ENCODE measurements at regions of chr4 and their contacts with region 1.

Region 1: DNA sequence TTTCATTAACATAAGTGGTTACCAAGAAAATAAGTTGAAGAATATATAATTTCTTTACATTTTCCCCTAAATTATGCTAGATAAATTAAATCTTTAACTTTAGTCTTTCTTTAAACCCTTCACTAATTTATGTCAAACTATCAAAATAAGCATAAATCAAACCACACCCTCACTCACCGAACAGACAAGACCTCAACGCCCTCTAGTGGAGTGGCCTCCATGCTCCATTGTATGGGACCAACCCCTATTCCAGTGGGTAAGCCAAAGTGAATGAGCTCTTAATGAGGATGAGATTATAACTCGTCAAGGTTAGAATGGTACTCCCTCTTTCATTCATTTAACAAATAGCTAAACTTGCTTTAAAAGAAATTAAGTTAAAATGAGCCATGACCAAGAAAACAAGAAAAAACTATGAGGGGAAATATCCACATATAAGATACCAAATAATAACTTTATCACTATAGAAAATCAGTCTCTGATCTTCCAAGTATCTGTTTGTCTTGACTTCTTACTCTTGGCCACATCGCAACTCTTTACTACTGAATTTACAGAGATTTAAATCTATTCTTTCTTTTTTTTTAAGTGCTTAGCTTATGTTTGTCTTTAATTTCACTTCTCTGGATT is 15.6 kb upstream of the BBS12 start:
- DNase-seq: peak; percentile 61 to 67 (median 65)
- H3K4me3 ChIP-seq: no peak overlapping the region
- H3K4me3 Mint-ChIP-seq: no peak overlapping the region
- H3K27ac ChIP-seq: no peak overlapping the region
- H3K27ac Mint-ChIP-seq: peak overlapping the region in 3 of 7 donors; percentile 1 to 63 (median 28)
- H3K4me1 ChIP-seq: peaks cover 5% of the 10 kb centered on the region
- H3K4me1 Mint-ChIP-seq: peaks cover 0 to 5% (median 2%) of the 10 kb centered on the region in 4 donors
- H3K27me3 ChIP-seq: no peaks in the 10 kb centered on the region
- H3K27me3 Mint-ChIP-seq: no peaks in the 10 kb centered on the region

Region 2: DNA sequence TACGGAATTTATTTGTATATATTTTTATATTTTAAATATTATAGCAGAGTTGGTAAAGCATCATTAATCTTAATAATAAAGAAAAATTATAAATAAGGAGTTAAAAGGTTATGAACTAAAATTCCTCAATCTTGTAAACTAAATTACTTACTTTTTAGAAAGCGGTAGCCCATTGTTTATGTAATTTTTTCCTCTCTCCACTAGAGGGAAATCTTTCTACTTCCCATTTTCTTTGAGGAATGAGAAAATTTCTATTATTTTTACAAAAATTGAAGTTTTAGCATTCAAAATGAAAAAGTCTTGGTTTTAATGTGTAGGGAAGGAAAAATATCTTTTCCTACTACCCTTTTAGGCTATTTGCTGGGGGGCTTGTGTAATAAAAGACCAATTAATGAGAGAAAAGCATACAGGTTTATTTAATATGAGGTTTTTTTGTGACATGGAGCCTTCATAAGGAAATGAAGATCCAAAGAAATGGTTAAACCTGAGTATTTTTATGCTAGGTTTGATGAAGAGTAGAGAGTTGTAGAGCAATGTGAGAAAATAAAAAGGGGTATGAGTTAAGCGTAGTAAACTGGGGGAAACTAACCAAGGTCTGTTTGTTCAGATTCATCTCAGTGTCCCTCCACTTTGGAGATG is 406.8 kb before region 1 on chr4:
- CTCF ChIA-PET with region 1: interaction called, 5 read pairs
- POLR2A ChIA-PET with region 1: no interaction called
- intact Hi-C with region 1: loop called (anchors 10 kb)
- DNase-seq: no peak
- H3K4me3 ChIP-seq: no peak overlapping the region
- H3K4me3 Mint-ChIP-seq: no peak overlapping the region
- H3K27ac ChIP-seq: no peak overlapping the region
- H3K27ac Mint-ChIP-seq: peak overlapping the region in 2 of 7 donors; percentile 23 to 75
- H3K4me1 ChIP-seq: no peaks in the 10 kb centered on the region
- H3K4me1 Mint-ChIP-seq: peaks cover 0 to 4% (median 2%) of the 10 kb centered on the region in 4 donors
- H3K27me3 ChIP-seq: no peaks in the 10 kb centered on the region
- H3K27me3 Mint-ChIP-seq: no peaks in the 10 kb centered on the region

Region 3: GRCh38 chr4:122602277-122603142 is 114.4 kb before region 1 on chr4:
- CTCF ChIA-PET with region 1: interaction called, 42 read pairs
- POLR2A ChIA-PET with region 1: no interaction called
- intact Hi-C with region 1: loop called (anchors 1 kb)
- DNase-seq: peak in 3 of 5 donors; percentile 24 to 30 (median 28)
- H3K4me3 ChIP-seq: no peak overlapping the region
- H3K4me3 Mint-ChIP-seq: peak overlapping the region in 1 of 8 donors; percentile 0
- H3K27ac ChIP-seq: no peak overlapping the region
- H3K27ac Mint-ChIP-seq: no peak overlapping the region
- H3K4me1 ChIP-seq: no peaks in the 10 kb centered on the region
- H3K4me1 Mint-ChIP-seq: peaks cover 0 to 5% (median 2%) of the 10 kb centered on the region in 4 donors
- H3K27me3 ChIP-seq: no peaks in the 10 kb centered on the region
- H3K27me3 Mint-ChIP-seq: peaks cover 0 to 9% of the 10 kb centered on the region in 2 donors

Region 4: DNA sequence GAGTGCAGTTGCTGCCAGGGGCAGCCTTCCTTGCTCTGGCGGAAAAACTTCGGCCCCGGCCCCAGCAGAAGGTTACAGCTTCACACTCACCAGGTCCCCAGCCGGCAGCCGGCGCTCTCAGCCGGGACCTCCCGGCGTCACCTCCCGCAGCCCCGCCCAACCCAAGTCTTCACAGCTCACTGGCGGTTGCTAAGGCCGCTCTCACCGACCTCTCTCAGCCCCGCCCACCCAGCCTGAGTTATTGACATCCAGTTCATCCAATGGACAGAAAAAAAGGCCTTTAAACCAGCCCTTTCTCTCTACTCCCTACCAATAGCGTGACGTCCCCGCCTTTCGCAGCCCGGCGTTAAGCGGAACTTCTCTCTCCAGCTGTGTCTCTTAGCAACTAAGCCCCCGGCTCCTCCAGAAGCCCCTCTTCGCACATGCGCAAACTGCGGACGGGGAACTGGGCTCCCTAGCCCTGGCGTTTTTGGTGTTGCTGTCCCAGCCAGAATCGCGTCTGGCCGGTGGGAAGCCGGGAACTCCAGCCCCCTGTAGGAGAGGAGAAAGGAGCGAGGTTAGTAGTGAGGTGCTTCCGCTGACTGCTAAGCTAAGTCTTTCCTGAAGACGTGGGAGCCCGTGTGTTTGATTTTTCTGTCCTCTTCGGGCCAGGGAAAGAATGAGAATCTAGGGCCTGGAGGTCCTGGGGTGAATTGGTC is 15.5 kb after region 1 on chr4 and contains the start of gene BBS12:
- CTCF ChIA-PET with region 1: interaction called, 37 read pairs
- POLR2A ChIA-PET with region 1: interaction called, 4 read pairs
- intact Hi-C with region 1: no loop called
- DNase-seq: peak; percentile 99
- H3K4me3 ChIP-seq: peak within 1 kb of the TSS; percentile 96 to 98
- H3K4me3 Mint-ChIP-seq: peak within 1 kb of the TSS; percentile 97 to 99 (median 98)
- H3K27ac ChIP-seq: peak within 1 kb of the TSS; percentile 75
- H3K27ac Mint-ChIP-seq: peak within 1 kb of the TSS; percentile 95 to 100 (median 99)
- H3K4me1 ChIP-seq: peaks cover 19% of the 10 kb centered on the region
- H3K4me1 Mint-ChIP-seq: peaks cover 11 to 22% (median 17%) of the 10 kb centered on the region in 4 donors
- H3K27me3 ChIP-seq: no peaks in the 10 kb centered on the region
- H3K27me3 Mint-ChIP-seq: no peaks in the 10 kb centered on the region
- total RNA-seq, gene BBS12: 3.7 to 4.1 TPM